ENCODE measurements at regions of chr10 and their contacts with region 1.

Region 1: DNA sequence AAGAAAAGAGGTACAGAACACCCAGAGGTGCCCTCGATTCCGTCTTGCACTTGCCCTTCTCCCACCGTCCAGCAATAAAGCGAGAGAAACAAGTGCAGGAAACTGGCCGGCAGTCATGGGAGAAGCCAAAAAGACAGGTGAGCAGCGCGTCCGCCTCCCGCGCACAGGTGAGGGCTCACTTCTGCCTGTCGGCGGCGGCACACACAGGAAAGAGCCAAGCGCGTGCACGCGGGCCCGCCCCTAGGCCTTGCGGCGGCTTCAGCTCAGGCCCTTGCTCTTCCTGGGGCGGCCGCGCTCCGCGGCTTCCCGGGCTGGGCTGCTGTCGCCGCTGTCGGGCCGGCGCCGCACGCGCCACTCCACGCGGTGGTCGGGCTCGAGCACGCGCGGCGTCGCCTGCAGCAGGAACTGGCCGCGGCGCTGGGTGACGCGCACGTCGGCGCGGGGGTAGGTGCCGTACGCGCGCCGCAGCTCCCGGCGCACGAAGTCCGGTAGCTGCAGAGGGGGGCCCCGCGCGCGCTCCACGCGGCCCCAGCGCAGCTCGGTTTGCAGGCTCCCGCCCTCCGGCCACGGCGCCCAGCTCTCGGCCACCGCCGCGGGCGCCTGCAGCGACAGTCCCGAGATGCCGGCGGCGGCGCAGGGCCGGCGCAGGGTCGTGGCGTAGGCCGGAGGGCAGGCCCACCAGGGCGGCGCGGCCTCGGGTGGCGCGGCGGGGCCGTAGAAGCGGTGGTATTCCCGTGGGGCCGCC is 977 bp downstream of the C10orf95 start:
- DNase-seq: peak; percentile 56
- ATAC-seq: peak; percentile 88
- H3K4me3 ChIP-seq: peak overlapping the region; percentile 99
- H3K27ac ChIP-seq: peak overlapping the region; percentile 88
- H3K4me1 ChIP-seq: peaks cover 18% of the 10 kb centered on the region
- H3K27me3 ChIP-seq: no peaks in the 10 kb centered on the region
- CTCF ChIP-seq: no peak
- EP300 ChIP-seq: no peak
- POLR2A ChIP-seq: peak; percentile 79
- RAD21 ChIP-seq: no peak

Region 2: DNA sequence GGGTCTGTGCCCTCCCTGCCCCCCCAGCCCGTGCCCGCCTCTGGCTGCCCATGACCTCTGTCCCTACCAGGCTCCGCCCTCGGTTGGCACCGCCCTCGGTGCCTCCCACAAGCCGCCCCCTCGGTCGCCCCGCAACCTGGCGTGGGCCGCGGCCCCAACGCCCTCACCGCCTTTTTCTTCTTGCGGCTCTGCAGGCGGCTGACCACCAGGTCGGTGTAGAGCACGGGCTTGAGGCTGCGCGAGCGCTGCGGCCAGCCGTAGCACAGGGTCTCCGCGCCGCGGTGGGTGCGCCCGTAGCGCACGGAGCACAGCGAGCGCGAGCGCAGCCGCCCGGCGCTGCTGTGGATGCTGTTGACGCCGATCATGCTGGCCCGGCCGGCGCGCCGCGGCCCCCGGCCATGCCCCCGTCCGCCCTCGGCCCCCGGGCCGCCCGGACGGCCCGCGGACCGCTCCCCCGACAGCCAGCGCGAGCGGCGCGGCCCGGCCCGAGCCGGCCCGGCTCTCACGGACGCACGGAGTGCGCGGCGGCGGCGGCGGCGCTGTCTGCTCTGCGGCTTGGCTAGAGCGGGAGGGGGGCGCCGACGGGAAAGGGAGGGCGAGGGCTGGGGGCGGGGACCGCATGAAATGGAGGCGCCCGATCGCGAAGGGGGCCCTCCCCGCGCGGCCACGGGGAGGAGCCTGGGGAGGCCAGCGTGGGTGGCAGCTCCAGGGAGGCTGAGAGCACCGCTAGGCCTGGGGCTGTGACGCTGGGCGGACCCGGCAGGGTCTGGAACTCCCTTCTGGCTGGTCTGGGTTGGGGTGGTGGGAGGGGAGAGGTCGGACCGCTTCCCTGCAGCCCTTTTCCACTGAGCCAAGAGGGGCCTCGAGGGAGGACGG is 41.4 kb before region 1 on chr10:
- CTCF ChIA-PET with region 1: interaction called, 10 read pairs
- POLR2A ChIA-PET with region 1: interaction called, 5 read pairs
- RAD21 ChIA-PET with region 1: interaction called, 3 read pairs
- SMC1A ChIA-PET with region 1: no interaction called
- in situ Hi-C with region 1: no loop called
- intact Hi-C with region 1: no loop called
- DNase-seq: no peak
- ATAC-seq: 0 out of 3 replicates have a peak, but pooled peaks have one; percentile 8
- H3K4me3 ChIP-seq: peak overlapping the region; percentile 22; the same call in 1 of the 2 replicates
- H3K27ac ChIP-seq: no peak overlapping the region
- H3K4me1 ChIP-seq: peaks cover 9% of the 10 kb centered on the region
- H3K27me3 ChIP-seq: peaks cover 17 to 21% of the 10 kb centered on the region in 2 experiments
- CTCF ChIP-seq: no peak
- EP300 ChIP-seq: no peak
- POLR2A ChIP-seq: peak; percentile 50; the same call in 1 of the 2 replicates
- RAD21 ChIP-seq: no peak

Region 3: GRCh38 chr10:102432162-102432950 is 18.0 kb before region 1 on chr10 and contains the start of gene CUEDC2:
- CTCF ChIA-PET with region 1: interaction called, 7 read pairs
- POLR2A ChIA-PET with region 1: interaction called, 38 read pairs
- RAD21 ChIA-PET with region 1: interaction called, 20 read pairs
- SMC1A ChIA-PET with region 1: interaction called, 7 read pairs
- in situ Hi-C with region 1: no loop called
- intact Hi-C with region 1: loop called (anchors 2 kb)
- DNase-seq: peak; percentile 88
- ATAC-seq: peak; percentile 95
- H3K4me3 ChIP-seq: peak within 1 kb of the TSS; percentile 93
- H3K27ac ChIP-seq: peak within 1 kb of the TSS; percentile 90
- H3K4me1 ChIP-seq: peaks cover 22% of the 10 kb centered on the region
- H3K27me3 ChIP-seq: no peaks in the 10 kb centered on the region
- CTCF ChIP-seq: no peak
- EP300 ChIP-seq: no peak; a peak in 1 of 4 replicates
- POLR2A ChIP-seq: peak; percentile 85
- RAD21 ChIP-seq: no peak
- polyA plus RNA-seq, gene CUEDC2: 20.4 to 45.2 TPM

Region 4: GRCh38 chr10:102461187-102462054 is 11.1 kb after region 1 on chr10:
- CTCF ChIA-PET with region 1: interaction called, 17 read pairs
- POLR2A ChIA-PET with region 1: interaction called, 69 read pairs
- RAD21 ChIA-PET with region 1: interaction called, 19 read pairs
- SMC1A ChIA-PET with region 1: interaction called, 23 read pairs
- in situ Hi-C with region 1: no loop called
- intact Hi-C with region 1: no loop called
- DNase-seq: peak; percentile 43
- ATAC-seq: peak; percentile 96
- H3K4me3 ChIP-seq: peak overlapping the region; percentile 73
- H3K27ac ChIP-seq: no peak overlapping the region
- H3K4me1 ChIP-seq: peaks cover 16% of the 10 kb centered on the region
- H3K27me3 ChIP-seq: no peaks in the 10 kb centered on the region
- CTCF ChIP-seq: no peak
- EP300 ChIP-seq: no peak
- POLR2A ChIP-seq: peak; percentile 53
- RAD21 ChIP-seq: no peak

Region 5: DNA sequence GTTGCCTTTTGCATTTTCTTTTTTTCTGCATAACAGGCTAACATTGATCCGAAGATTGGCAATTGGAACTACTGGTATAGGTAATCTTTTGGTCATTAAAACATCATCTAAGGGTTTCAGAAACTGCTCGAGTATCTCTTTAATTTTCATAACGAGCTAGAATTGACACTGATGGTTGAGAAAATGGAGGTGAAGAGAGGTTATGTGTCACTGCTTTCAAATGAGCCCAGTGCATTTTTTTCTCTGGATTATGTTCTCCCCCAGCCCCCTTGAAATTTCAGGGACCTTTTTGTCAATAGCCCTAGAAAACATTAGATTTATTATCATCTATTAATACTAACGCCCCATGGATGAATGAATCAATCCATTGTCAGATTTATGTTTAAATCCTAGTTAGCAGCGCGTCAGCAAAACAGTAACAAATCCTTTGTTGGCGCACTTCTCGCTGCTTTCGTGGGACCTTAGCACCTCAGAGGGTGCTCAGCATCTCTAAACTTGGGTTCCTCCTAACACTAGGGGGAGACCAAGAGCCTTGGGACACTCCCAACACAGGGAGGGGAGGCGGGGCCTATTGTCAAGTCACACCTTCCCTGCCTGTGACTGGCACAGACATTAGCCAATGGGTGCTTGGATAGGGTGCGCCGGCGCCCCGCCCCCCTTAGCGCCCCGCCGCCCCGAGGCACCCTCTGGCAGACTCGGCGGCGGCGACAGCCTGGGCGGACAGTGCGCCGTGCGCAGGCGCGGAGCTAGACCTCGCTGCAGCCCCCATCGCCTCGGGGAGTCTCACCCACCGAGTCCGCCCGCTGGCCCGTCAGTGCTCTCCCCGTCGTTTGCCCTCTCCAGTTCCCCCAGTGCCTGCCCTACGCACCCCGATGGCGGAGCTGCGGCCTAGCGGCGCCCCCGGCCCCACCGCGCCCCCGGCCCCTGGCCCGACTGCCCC is 53.2 kb after region 1 on chr10 and contains the start of gene SUFU:
- CTCF ChIA-PET with region 1: interaction called, 4 read pairs
- POLR2A ChIA-PET with region 1: interaction called, 6 read pairs
- RAD21 ChIA-PET with region 1: interaction called, 4 read pairs
- SMC1A ChIA-PET with region 1: interaction called, 3 read pairs
- in situ Hi-C with region 1: no loop called
- intact Hi-C with region 1: loop called (anchors 2 kb)
- DNase-seq: peak; percentile 93
- ATAC-seq: peak; percentile 82
- H3K4me3 ChIP-seq: peak within 1 kb of the TSS; percentile 88
- H3K27ac ChIP-seq: peak within 1 kb of the TSS; percentile 72; the same call in 1 of the 2 replicates
- H3K4me1 ChIP-seq: peaks cover 7% of the 10 kb centered on the region
- H3K27me3 ChIP-seq: no peaks in the 10 kb centered on the region
- CTCF ChIP-seq: peak; percentile 82 to 98 (median 89); a peak in 5 of 6 replicates
- EP300 ChIP-seq: no peak
- POLR2A ChIP-seq: peak; percentile 92
- RAD21 ChIP-seq: peak; percentile 88
- polyA plus RNA-seq, gene SUFU: 0.68 to 0.84 TPM

Measured in GM12878 (cell line).